Ascending aorta (tissue), 2 donors: ENCODE measurements at regions of chr1 and their contacts with region 1.

Region 1: GRCh38 chr1:26999440-26999987 is 6.0 kb downstream of the TRNP1 start:
- DNase-seq: peak; percentile 57 to 96
- H3K4me3 ChIP-seq: peak overlapping the region in 1 of 2 donors; percentile 26
- H3K27ac ChIP-seq: peak overlapping the region; percentile 91 to 95
- H3K4me1 ChIP-seq: peaks cover 29 to 60% of the 10 kb centered on the region in 2 donors
- H3K27me3 ChIP-seq: no peaks in the 10 kb centered on the region
- CTCF ChIP-seq: no peak

Region 2: GRCh38 chr1:27010989-27011764 is 11.7 kb after region 1 on chr1:
- intact Hi-C with region 1: loop called (anchors 1 kb)
- DNase-seq: peak; percentile 54 to 89
- H3K4me3 ChIP-seq: peak overlapping the region; percentile 72 to 76
- H3K27ac ChIP-seq: peak overlapping the region; percentile 83 to 94
- H3K4me1 ChIP-seq: peaks cover 16 to 24% of the 10 kb centered on the region in 2 donors
- H3K27me3 ChIP-seq: no peaks in the 10 kb centered on the region
- CTCF ChIP-seq: no peak

Region 3: DNA sequence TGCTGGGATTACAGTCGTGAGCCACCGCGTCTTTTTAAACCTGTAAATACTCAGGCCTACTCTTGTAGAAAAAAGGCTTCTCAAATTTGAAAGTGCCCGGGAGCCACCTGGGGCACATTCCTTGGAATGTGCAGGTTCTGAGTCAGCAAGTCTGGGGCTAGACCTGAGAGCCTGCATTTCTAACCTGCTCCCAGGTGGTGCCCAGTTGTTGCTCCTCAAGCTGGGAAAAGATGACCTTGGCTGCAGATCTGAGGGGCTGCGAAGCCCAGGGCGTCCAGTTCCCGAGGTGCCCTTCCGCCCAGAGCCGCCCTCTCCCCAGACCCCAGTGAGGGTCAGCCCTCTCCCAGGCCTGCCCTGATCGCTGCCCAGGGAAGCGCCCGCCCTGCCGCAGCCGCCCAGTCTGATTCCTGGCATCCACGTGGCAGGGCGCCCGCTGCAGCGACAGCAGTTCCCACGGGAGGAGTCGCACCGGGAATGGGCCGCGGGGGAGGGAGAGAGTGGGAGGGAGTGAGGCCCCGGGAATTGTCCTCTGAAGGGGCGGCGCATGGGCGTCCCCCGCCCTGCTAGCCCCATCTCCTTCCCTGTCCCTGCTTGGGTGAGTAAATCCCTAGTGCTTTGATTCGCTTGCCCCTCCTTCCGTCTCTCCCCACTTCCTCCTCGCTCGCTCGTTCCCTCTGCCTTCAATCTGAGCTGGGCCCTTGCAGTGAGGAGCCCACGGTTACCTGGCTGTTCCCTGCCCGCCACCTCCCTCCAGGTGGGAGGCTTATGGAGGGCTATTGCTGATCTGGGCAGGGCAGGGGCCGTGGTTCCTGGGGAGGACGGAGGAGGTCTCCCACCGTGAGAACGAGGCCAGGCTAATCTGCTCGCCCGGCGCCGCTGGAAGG is 32.0 kb after region 1 on chr1:
- intact Hi-C with region 1: loop called (anchors 1 kb)
- DNase-seq: peak; percentile 52 to 92
- H3K4me3 ChIP-seq: peak overlapping the region; percentile 48 to 66
- H3K27ac ChIP-seq: peak overlapping the region; percentile 80 to 93
- H3K4me1 ChIP-seq: peaks cover 11 to 25% of the 10 kb centered on the region in 2 donors
- H3K27me3 ChIP-seq: no peaks in the 10 kb centered on the region
- CTCF ChIP-seq: peak in 1 of 3 experiments; percentile 0

Region 4: GRCh38 chr1:27044613-27045151 is 45.2 kb after region 1 on chr1:
- intact Hi-C with region 1: loop called (anchors 1 kb)
- DNase-seq: peak; percentile 43 to 94
- H3K4me3 ChIP-seq: peak overlapping the region; percentile 24 to 43
- H3K27ac ChIP-seq: no peak overlapping the region
- H3K4me1 ChIP-seq: peaks cover 5 to 7% of the 10 kb centered on the region in 2 donors
- H3K27me3 ChIP-seq: no peaks in the 10 kb centered on the region
- CTCF ChIP-seq: peak; percentile 94 to 98 (median 95)

Region 5: GRCh38 chr1:27086026-27086425 is 86.5 kb after region 1 on chr1:
- intact Hi-C with region 1: no loop called
- DNase-seq: no peak
- H3K4me3 ChIP-seq: no peak overlapping the region
- H3K27ac ChIP-seq: no peak overlapping the region
- H3K4me1 ChIP-seq: no peaks in the 10 kb centered on the region
- H3K27me3 ChIP-seq: no peaks in the 10 kb centered on the region
- CTCF ChIP-seq: no peak

Region 6: GRCh38 chr1:27097484-27097917 is 98.0 kb after region 1 on chr1:
- intact Hi-C with region 1: loop called (anchors 1 kb)
- DNase-seq: peak in 1 of 2 donors; percentile 90
- H3K4me3 ChIP-seq: no peak overlapping the region
- H3K27ac ChIP-seq: no peak overlapping the region
- H3K4me1 ChIP-seq: peaks cover 16 to 22% of the 10 kb centered on the region in 2 donors
- H3K27me3 ChIP-seq: no peaks in the 10 kb centered on the region
- CTCF ChIP-seq: peak; percentile 95 to 98 (median 97)

Region 7: DNA sequence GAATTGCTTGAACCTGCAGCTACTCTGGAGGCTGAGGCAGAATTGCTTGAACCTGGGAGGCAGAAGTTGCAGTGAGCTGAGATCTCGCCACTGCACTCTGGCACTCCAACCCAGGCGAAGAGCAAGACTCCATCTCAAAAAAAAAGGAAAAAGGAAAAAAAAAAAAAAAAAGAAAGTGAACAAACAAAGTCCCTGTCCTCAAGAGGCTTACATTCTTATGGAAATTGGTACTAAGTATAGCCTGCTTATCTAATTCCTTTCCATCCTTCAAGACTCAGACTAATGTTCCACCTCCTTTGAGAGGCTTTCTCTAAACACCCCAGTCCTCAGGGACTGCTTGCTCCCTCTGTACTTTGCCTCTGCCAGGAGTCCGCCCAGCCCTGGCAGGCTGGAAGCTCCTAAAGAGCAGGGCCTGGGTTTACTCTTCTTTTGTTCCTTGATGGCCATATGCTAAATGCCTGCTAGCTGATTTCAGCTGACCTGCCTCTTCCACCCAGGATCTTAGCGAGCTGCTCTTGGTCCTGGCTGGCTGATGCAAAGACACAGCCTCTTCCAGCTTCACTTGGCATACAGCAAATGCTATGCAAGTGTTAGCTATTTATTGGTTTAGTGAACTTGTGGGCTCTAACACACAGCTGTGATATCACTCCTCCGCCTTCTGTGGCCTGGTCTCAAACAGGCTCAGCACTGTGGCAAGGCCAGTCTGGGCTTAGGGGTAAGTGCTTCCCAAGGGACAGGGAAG is 145.6 kb after region 1 on chr1:
- intact Hi-C with region 1: no loop called
- DNase-seq: no peak
- H3K4me3 ChIP-seq: no peak overlapping the region
- H3K27ac ChIP-seq: peak overlapping the region; percentile 85 to 91
- H3K4me1 ChIP-seq: peaks cover 14 to 32% of the 10 kb centered on the region in 2 donors
- H3K27me3 ChIP-seq: no peaks in the 10 kb centered on the region
- CTCF ChIP-seq: no peak

Region 8: GRCh38 chr1:27154991-27155781 is 155.7 kb after region 1 on chr1 and contains the start of gene SLC9A1:
- intact Hi-C with region 1: loop called (anchors 2 kb)
- DNase-seq: peak; percentile 82 to 97
- H3K4me3 ChIP-seq: peak within 1 kb of the TSS; percentile 72 to 82
- H3K27ac ChIP-seq: peak within 1 kb of the TSS; percentile 80 to 89
- H3K4me1 ChIP-seq: peaks cover 22 to 26% of the 10 kb centered on the region in 2 donors
- H3K27me3 ChIP-seq: no peaks in the 10 kb centered on the region
- CTCF ChIP-seq: peak; percentile 74 to 85 (median 82)
- total RNA-seq, gene SLC9A1: 22.0 TPM

Region 9: GRCh38 chr1:27234049-27234882 is 234.8 kb after region 1 on chr1 and contains the start of gene WDTC1:
- intact Hi-C with region 1: loop called (anchors 5 kb)
- DNase-seq: peak; percentile 90 to 99
- H3K4me3 ChIP-seq: peak within 1 kb of the TSS; percentile 92 to 99
- H3K27ac ChIP-seq: peak within 1 kb of the TSS; percentile 75 to 77
- H3K4me1 ChIP-seq: peaks cover 7 to 10% of the 10 kb centered on the region in 2 donors
- H3K27me3 ChIP-seq: no peaks in the 10 kb centered on the region
- CTCF ChIP-seq: no peak
- total RNA-seq, gene WDTC1: 36.2 TPM